KBM-7 (cell line): ENCODE measurements at regions of chr17 and their contacts with region 1.

Region 1: DNA sequence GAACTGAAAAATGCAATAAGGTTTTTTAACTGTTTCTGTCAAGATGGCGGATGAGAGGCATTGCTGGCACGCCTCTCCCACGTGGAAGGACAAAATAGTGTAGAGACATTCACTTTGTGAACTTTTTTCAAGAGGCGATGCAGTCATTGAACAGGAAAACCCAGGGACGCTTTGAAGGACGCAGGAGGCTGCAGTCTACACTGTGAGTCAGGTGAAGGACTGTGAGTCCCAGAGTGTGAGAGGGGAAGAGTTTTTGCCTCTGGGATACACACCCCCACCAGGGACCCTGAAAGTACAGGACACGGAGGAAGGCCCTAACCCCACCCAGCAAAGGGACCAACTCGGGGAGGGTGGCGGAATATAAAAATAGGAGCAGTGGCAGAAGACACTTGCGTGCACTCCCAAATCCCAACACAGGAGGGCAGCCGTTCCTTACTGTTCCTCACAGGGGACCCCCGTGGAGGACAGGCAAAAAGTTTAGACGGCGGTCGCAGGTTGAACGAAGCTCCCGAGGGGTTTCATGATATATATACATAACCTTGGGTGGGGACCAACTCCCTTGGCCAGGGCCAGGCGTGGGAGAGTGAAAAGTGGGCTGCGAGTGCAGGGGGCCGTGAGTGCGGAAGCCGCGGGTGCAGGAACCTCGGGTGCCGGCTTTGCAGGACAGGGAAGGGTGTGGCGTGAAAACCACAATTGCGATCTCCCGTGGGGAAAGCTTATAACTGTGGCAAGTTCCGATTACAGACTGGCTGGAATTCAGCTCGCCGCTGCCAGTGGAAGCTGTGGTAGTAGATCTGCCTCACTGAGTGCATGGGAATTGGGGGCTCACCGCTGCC is 82.0 kb upstream of the ALOX12 start:
- DNase-seq: peak; percentile 81

Region 2: GRCh38 chr17:7004398-7005253 is 90.8 kb after region 1 on chr17:
- in situ Hi-C with region 1: loop called (anchors 10 kb)
- DNase-seq: peak; percentile 88